ENCODE measurements at regions of chr17 and their contacts with region 1.

Region 1: DNA sequence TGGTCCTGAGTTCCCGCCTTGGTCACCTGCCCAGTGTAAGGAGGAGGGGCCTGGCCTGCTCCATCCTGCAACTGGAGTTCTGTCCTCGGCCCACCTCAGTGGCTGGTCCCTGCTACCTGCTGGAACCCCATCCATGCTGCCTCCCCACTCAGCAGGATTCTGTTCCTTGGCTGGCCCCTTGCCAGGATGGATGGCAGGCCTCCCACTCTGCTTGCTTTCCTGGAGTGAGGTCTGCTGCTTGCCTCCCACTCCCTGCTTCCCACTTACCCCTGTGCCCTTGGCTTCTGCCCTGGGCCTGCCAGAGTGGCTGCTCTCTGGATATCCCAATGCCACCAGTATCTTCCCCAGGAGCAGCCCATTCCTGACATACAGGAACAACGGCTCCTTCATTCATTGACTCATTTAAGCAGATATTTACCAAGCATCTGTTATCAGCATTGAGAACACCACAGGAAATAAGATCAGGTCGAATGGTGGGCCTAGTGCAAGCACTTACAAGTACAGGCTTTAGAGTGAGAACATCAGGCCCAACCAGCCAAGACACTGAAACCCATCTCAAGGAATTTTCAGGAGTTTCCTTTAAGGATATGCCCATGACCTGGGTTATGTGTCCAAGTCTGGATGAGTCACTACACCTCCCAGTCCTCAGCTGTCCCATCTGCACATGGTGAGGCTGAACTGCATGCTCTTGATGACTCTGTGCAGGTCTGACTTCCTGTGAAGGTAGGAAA is 17.0 kb upstream of the RPRML start:
- DNase-seq: no peak
- H3K4me3 Mint-ChIP-seq: no peak overlapping the region
- H3K27ac Mint-ChIP-seq: no peak overlapping the region
- H3K4me1 Mint-ChIP-seq: no peaks in the 10 kb centered on the region
- H3K27me3 Mint-ChIP-seq: peaks cover 2% of the 10 kb centered on the region

Region 2: GRCh38 chr17:46841561-46842379 is 154.2 kb before region 1 on chr17:
- intact Hi-C with region 1: loop called (anchors 1 kb)
- DNase-seq: no peak
- H3K4me3 Mint-ChIP-seq: no peak overlapping the region
- H3K27ac Mint-ChIP-seq: no peak overlapping the region
- H3K4me1 Mint-ChIP-seq: no peaks in the 10 kb centered on the region
- H3K27me3 Mint-ChIP-seq: peaks cover 39% of the 10 kb centered on the region

Region 3: GRCh38 chr17:46940621-46941404 is 55.2 kb before region 1 on chr17:
- intact Hi-C with region 1: loop called (anchors 1 kb)
- DNase-seq: peak; percentile 51
- H3K4me3 Mint-ChIP-seq: no peak overlapping the region
- H3K27ac Mint-ChIP-seq: peak overlapping the region; percentile 44
- H3K4me1 Mint-ChIP-seq: peaks cover 14% of the 10 kb centered on the region
- H3K27me3 Mint-ChIP-seq: peaks cover 1% of the 10 kb centered on the region